ENCODE measurements at regions of chr12 and their contacts with region 1.

Region 1: DNA sequence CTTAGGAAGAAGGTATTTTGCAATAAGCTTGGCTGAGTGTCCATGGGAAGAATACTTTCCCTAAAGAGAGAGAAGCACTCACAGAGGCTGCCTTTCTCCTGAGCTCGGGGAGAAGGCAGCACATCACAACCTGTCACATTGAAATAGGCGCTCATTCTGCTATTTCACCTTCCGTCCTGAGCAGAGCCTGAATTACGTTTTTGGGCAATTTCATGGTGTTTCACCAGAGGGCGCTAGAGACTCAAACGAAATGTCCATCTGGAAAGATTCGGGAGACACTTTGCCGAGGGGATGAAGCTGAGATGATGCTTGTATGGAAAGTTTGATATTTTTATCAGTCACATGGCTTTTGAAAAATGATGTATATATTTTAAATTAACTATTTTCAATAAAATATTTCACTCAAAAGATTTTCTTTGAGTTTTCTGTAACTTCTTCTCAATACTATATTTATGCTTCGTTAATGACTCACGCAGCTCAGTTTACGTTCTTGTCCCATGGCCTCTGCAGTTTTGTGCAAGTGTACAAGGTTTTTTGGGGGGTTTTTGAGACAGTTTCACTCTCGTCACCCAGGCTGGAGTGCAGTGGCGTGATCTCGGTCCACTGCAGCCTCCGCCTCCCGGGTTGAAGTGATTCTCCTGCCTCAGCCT is 17.4 kb upstream of the B4GALNT3 start:
- DNase-seq: no peak
- H3K4me3 ChIP-seq: no peak overlapping the region
- H3K27ac ChIP-seq: no peak overlapping the region
- H3K4me1 ChIP-seq: no peaks in the 10 kb centered on the region
- H3K27me3 ChIP-seq: peaks cover 0 to 5% (median 0%) of the 10 kb centered on the region in 4 donors
- CTCF ChIP-seq: peak; percentile 26 to 81 (median 76)
- POLR2A ChIP-seq: no peak

Region 2: DNA sequence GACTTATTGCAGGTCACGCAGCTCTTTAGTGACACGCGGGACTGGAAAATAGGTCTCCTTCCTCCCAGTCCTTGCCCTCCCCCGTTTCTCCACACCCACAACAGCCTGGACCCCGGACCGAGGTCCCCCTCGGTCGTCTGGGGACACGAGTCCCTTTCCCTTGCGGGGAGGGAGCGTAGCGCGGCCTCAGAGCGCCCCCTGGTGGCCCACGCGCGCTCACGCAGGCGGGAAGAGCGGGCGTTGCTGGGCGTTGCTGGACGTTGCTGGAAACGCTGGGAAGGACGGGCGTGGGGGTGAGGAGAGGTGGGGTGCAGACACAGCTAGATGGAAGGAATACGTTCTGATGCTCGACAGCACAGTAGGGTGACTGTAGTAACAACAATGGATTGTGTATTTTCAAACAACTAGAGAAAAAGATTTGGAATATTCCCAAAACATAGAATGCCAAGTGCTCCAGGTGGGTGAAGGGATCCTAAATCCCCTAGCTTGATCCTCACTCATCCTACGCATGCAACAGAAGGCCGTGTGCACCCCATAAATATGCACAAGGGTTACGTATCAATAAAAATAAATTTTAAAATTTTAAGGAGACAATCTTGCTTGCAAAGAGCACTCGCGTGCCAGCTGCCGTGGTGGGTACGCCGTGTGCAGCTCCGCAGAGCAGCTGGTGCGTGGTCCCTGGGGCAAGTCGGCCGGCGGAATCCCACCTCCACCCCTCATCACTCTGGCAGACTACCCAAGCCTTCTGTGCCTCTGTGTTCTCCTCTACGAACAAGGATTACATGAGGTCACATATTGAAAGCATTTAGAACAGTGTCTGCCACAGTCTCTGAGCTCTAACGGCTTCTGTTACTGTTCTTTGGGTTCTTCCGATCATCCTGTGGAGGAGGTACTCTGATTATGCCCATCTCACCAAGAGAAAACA is 104.8 kb after region 1 on chr12:
- intact Hi-C with region 1: loop called (anchors 5 kb)
- DNase-seq: no peak
- H3K4me3 ChIP-seq: no peak overlapping the region
- H3K27ac ChIP-seq: no peak overlapping the region
- H3K4me1 ChIP-seq: peaks cover 2 to 18% (median 5%) of the 10 kb centered on the region in 3 donors
- H3K27me3 ChIP-seq: peaks cover 0 to 29% (median 0%) of the 10 kb centered on the region in 4 donors
- CTCF ChIP-seq: peak; percentile 82 to 100 (median 100)
- POLR2A ChIP-seq: no peak

Region 3: GRCh38 chr12:674272-674781 is 232.0 kb after region 1 on chr12:
- intact Hi-C with region 1: no loop called
- DNase-seq: no peak
- H3K4me3 ChIP-seq: no peak overlapping the region
- H3K27ac ChIP-seq: peak overlapping the region in 3 of 4 donors; percentile 21 to 70 (median 62)
- H3K4me1 ChIP-seq: no peaks in the 10 kb centered on the region
- H3K27me3 ChIP-seq: no peaks in the 10 kb centered on the region
- CTCF ChIP-seq: no peak
- POLR2A ChIP-seq: peak in 1 of 4 donors; percentile 46

Measured in esophagus squamous epithelium (tissue), 5 donors.